AG04449 (cell line): ENCODE measurements at regions of chr3 and their contacts with region 1.

Region 1: GRCh38 chr3:148955544-148956346 is 35.6 kb upstream of the GYG1 start:
- DNase-seq: peak; percentile 89
- H3K4me3 ChIP-seq: no peak overlapping the region
- CTCF ChIP-seq: peak; percentile 52

Region 2: GRCh38 chr3:148943506-148944205 is 12.1 kb before region 1 on chr3:
- CTCF ChIA-PET with region 1: interaction called, 13 read pairs
- POLR2A ChIA-PET with region 1: no interaction called
- DNase-seq: peak; percentile 69
- H3K4me3 ChIP-seq: no peak overlapping the region
- CTCF ChIP-seq: peak; percentile 50

Region 3: GRCh38 chr3:149042789-149043386 is 87.1 kb after region 1 on chr3:
- CTCF ChIA-PET with region 1: interaction called, 14 read pairs
- POLR2A ChIA-PET with region 1: no interaction called
- DNase-seq: no peak
- H3K4me3 ChIP-seq: no peak overlapping the region
- CTCF ChIP-seq: no peak

Region 4: GRCh38 chr3:149273096-149273751 is 317.5 kb after region 1 on chr3:
- CTCF ChIA-PET with region 1: interaction called, 127 read pairs
- POLR2A ChIA-PET with region 1: no interaction called
- DNase-seq: peak; percentile 58
- H3K4me3 ChIP-seq: no peak overlapping the region
- CTCF ChIP-seq: peak; percentile 79

Region 5: DNA sequence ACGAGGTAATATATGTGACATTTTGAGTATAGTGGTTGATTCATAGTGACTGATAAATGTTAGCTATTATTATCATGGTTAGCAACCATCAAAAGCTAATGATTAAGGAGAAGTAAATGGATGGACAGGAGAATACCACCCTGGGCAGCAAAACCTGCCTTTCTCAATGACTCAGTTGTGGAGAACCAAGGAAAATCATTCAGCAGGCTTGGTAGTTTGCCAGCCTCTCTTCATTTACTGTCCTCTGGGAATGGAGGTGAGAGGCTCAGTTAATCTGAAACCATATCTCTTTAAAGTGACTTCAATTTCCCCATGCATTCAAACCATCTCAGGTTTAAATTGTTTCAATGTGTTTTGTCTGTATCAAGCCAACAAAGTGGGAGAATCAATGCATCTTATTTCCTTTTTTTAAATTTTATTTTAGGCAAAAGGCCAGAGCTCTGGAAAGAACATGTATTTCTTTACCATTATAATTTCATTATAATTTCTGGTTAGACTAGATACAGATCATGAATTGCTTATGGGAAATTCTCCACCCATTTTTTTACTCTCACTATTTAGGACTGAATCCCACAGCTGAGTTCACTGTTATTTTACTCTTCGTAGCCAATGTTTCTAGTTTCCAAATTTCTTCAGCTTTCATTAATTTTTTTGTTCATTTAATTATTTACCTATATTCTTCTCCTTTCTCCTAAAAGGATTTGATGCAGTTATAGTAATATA is 375.0 kb after region 1 on chr3:
- CTCF ChIA-PET with region 1: interaction called, 55 read pairs
- POLR2A ChIA-PET with region 1: no interaction called
- DNase-seq: no peak
- H3K4me3 ChIP-seq: no peak overlapping the region
- CTCF ChIP-seq: no peak